ENCODE measurements at regions of chr20 and their contacts with region 1.

Region 1: DNA sequence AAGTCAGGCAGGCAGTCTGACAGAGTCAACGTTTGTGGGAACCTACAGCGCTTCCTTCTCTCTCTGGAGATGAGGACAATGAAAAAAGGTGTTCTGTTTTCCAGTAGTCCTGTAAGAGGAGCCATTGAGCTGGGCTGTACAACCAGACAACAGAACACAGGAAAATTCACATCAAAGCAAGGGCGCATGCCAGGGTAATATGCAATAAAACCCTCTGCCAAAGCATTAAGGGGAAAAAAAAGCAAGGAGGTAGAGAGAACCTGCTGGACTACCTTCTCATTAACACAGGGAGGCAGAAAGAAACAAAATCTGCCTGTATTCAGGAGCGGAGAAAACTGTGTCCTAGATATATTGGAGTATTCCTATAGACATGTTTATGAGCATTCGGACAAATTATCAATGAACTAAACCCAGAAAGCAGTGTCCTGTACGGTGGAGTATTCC is 1.3 kb downstream of the RNF24 start:
- DNase-seq: peak; percentile 71 to 74 (median 74)
- H3K4me3 ChIP-seq: peak overlapping the region in 6 of 7 experiments; percentile 79 to 98 (median 88)
- H3K27ac ChIP-seq: peak overlapping the region; percentile 61 to 83
- H3K4me1 ChIP-seq: peaks cover 29 to 71% (median 50%) of the 10 kb centered on the region in 4 experiments
- H3K27me3 ChIP-seq: no peaks in the 10 kb centered on the region

Region 2: DNA sequence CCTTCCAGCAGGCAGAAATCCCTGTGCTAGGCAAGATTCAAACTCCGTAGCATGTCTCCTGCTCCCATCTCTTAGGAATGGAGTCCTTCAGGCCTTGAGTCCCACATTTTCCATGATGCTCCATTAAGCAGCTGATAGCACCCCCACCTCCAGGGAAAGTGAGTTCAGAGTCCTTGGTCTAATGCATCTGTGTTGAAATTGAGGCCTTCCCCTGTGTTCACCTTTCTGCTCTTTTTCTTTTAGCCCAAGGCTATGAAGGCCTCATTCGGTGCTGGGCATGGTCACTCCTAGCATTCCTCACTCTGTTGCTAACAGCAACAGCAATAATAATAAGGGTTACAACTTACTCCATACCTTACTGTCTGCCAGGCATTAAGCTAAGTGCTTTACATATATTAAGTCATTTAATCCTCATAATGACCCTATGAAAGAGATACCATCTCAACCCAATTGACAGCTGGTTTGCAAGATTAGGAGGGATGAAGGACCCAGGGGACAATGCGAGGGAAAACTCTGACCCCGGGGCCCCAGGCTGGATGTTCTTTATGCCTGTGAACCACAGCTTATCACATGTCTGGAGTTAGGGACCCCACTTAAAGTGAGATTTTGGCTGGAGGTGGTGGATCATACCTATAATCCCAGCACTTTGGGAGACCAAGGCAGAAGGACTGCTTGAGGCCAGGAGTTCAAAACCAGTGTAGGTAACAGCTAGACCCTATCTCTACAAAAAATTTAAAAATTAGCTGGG is 142.3 kb before region 1 on chr20:
- CTCF ChIA-PET with region 1: no interaction called
- POLR2A ChIA-PET with region 1: no interaction called
- DNase-seq: no peak
- H3K4me3 ChIP-seq: no peak overlapping the region
- H3K27ac ChIP-seq: no peak overlapping the region
- H3K4me1 ChIP-seq: peaks cover 0 to 14% (median 10%) of the 10 kb centered on the region in 4 experiments
- H3K27me3 ChIP-seq: no peaks in the 10 kb centered on the region

Region 3: GRCh38 chr20:3995067-3995748 is 18.8 kb before region 1 on chr20:
- CTCF ChIA-PET with region 1: interaction called, 14 read pairs
- POLR2A ChIA-PET with region 1: no interaction called
- DNase-seq: peak in 2 of 3 donors; percentile 69 to 78
- H3K4me3 ChIP-seq: peak overlapping the region in 1 of 7 experiments; percentile 11
- H3K27ac ChIP-seq: peak overlapping the region in 1 of 2 experiments; percentile 68
- H3K4me1 ChIP-seq: peaks cover 10 to 34% (median 25%) of the 10 kb centered on the region in 4 experiments
- H3K27me3 ChIP-seq: no peaks in the 10 kb centered on the region

Region 4: DNA sequence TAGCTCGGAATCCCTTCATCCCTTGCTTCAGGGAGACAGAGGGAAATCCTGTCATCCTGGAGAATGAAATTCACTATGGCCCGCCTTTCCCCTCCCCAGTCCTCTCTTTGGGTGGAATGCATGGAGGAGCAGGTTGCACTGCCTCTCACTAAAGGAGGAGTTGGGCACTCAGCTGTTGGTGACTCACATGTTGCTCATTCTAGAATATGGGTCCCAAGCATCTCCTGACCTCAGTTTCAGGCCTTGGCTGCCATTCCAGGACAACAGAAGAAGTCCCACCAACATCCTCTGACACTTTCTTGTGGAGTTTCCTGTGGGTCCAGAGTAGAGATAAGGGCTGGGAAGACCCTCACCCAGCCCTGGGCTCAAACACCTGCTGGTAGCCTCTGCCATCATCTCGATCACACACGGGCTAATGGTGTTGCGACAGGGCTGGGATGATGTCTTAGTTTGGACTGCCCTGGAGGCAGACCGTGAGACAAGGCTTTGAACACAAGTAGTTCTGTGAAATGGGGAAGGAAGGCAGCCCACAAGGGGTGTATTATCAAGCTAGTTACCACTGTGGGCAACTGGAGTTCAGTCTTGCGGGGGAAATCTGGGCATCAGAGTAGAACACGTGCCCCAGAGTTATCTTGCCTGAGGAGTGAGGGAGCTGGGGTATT is 53.7 kb after region 1 on chr20:
- CTCF ChIA-PET with region 1: interaction called, 21 read pairs
- POLR2A ChIA-PET with region 1: interaction called, 3 read pairs
- DNase-seq: no peak
- H3K4me3 ChIP-seq: no peak overlapping the region
- H3K27ac ChIP-seq: no peak overlapping the region
- H3K4me1 ChIP-seq: peaks cover 18 to 82% (median 54%) of the 10 kb centered on the region in 4 experiments
- H3K27me3 ChIP-seq: no peaks in the 10 kb centered on the region

Region 5: DNA sequence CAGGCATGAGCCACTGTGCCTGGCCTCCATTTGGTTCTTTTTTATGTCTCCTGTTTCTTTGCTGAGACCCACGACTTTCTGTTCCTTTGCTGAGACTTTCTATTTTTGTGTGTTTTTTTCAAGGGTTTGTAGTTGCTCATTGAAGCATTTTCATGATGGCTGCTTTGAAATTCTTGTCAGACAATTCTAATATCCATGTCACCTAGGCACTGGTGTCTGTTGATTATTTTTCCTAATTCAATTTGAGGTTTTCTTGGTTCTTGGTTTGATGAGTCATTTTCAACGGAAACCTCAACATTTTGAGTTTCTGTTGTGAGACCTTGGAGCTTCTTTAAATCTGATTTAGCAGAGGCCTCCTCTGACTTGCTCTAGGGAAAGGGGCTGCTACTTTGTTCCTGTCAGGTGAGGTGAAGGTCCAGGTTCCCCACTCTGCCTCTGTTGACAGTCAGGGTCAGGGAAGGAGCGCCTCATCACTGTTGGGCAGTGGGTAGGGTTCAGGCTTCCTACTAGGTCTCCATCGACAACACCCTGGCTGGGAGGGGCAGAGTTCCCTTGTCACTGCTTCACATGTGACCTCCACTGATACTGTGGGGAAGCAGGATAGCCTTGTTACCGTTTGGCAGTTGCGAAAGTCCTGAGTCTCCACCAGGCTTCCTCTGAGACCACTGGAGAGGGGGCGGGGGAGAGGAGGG is 68.5 kb after region 1 on chr20:
- CTCF ChIA-PET with region 1: interaction called, 44 read pairs
- POLR2A ChIA-PET with region 1: interaction called, 4 read pairs
- DNase-seq: peak; percentile 93 to 98 (median 98)
- H3K4me3 ChIP-seq: peak overlapping the region in 5 of 7 experiments; percentile 34 to 73 (median 47)
- H3K27ac ChIP-seq: peak overlapping the region; percentile 81 to 93
- H3K4me1 ChIP-seq: peaks cover 25 to 64% (median 46%) of the 10 kb centered on the region in 4 experiments
- H3K27me3 ChIP-seq: no peaks in the 10 kb centered on the region

Measured in common myeloid progenitor, CD34-positive (primary cell).